Head of caudate nucleus (tissue), 42 donors: ENCODE measurements at regions of chr2 and their contacts with region 1.

Region 1: DNA sequence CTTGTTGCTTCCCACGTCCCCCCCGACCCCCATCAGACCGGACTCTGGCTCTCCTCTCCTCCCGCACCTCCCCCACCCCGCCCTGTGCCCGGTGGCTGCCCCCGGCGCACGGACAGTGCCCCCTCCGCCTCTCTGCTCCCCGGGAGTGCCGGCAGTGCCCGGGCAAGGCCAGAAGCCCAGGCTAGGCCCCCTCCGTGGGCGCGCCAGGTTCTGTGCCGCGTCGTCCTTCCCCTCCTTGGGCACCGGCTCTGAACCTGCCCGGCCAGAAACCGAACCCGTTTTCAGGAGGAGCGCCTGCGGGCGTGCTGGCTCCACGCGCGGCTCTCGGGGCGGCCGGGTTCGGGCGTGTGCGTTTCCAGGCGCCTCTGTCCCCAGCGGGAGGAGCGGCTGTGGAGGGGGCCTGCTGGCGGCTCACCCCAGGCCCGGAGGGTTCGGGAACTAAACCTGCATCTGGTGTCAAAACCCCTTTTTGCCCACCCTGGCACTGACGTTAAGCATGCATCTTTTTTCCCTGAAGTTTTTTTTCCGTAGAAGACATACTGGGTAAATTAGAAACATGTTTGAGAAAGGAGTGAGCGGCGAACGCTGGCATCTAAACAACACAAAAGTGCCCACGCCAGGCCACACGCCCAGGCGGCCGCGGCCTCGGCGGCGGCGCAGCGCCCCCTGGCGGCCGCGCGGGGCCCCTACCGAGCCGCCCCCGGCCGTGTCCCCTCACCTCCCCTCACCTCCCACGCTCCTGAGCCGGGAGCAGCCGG is 123.9 kb upstream of the SLC1A4 start:
- DNase-seq: peak; percentile 42 to 87 (median 72)

Region 2: DNA sequence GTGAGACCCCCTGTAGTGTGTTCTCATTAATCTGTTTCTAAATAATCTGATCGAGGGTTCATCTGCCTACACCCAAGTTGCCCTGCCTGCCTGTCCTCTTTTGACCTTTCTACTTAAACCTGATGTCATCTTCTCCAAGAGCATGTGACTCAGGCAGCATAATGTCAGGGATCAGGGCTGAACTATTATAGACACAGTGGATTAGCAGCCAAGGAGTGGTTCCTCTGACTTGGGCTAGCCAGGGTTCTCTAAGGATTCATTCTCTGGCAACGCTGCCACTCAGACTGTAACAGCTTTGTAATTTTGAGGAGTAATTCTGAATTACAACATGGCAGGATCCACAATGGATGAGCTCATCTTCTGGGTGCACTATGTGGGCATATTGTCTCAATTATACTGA is 1152.5 kb before region 1 on chr2:
- intact Hi-C with region 1: no loop called
- DNase-seq: no peak

Region 3: GRCh38 chr2:64586883-64587481 is 278.3 kb before region 1 on chr2:
- intact Hi-C with region 1: loop called (anchors 2 kb)
- DNase-seq: peak in 1 of 42 donors; percentile 50

Region 4: GRCh38 chr2:65436169-65436823 is 571.0 kb after region 1 on chr2:
- intact Hi-C with region 1: no loop called
- DNase-seq: peak; percentile 66 to 94 (median 82)